CD8-positive, alpha-beta T cell (primary cell): ENCODE measurements at regions of chr1 and their contacts with region 1.

Region 1: DNA sequence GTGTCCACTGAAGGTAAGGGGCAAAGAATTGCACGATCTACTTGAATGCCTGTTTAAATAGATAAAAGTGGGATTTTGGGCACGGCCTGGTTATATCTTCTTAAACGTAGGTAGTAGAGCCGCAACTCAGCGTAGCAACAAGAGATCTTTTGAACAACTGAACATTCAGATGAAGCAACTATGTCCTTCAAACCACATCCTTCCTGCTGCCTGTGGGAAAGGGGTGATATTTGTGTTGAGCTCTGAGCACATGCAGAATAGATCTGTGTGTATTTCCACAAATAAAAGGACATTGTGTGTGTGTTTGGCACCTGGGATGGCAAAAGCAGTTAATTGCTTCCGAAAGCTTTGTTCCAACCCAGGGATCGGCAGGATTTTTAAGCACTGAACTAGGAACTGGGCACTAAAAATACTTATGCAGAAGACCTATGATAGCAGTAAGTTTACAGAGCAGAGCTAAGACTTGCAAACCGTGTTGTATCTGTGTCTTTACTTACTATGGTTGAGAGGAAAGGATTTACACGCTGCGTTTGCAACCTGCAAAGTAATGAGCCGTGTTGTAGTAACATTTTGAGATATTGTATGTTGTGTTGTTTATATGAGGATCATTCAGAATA is 333.4 kb downstream of the CHRM3 start:
- DNase-seq: peak in 8 of 9 experiments; percentile 14 to 83 (median 62)
- ATAC-seq: peak; percentile 81
- H3K4me3 ChIP-seq: peak overlapping the region; percentile 53 to 64
- H3K4me3 Mint-ChIP-seq: no peak overlapping the region
- H3K27ac ChIP-seq: peak overlapping the region; percentile 84 to 91
- H3K27ac Mint-ChIP-seq: peak overlapping the region; percentile 96
- H3K4me1 ChIP-seq: peaks cover 53% of the 10 kb centered on the region
- H3K4me1 Mint-ChIP-seq: peaks cover 47% of the 10 kb centered on the region
- H3K27me3 ChIP-seq: no peaks in the 10 kb centered on the region
- H3K27me3 Mint-ChIP-seq: no peaks in the 10 kb centered on the region
- CTCF ChIP-seq: no peak

Region 2: DNA sequence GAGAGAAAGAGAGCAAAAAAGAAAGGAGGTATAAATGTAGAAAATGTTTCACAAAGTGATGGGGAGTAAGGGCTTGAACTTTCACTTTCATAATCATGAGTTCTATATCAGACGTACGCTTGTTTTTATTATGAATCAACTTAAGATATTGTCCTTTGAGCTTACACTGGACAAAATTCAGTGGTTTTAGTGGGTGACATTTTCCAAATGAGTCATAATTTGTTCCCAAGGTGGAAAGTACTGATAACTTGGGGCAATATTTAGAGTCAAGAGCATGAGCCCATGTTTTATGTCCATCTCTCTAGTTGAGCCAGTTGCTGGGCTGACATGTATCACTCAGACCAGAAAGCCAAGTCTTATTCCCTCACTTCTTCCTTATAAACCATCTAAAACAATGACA is 171.8 kb before region 1 on chr1:
- CTCF ChIA-PET with region 1: no interaction called
- POLR2A ChIA-PET with region 1: interaction called, 4 read pairs
- intact Hi-C with region 1: loop called in 1 of 2 experiments (anchors 10 kb)
- DNase-seq: peak in 2 of 9 experiments; percentile 12 to 29
- ATAC-seq: peak; percentile 46
- H3K4me3 ChIP-seq: peak overlapping the region; percentile 27 to 37
- H3K4me3 Mint-ChIP-seq: peak overlapping the region; percentile 72
- H3K27ac ChIP-seq: peak overlapping the region in 1 of 2 experiments; percentile 25
- H3K27ac Mint-ChIP-seq: peak overlapping the region; percentile 85
- H3K4me1 ChIP-seq: no peaks in the 10 kb centered on the region
- H3K4me1 Mint-ChIP-seq: peaks cover 16% of the 10 kb centered on the region
- H3K27me3 ChIP-seq: no peaks in the 10 kb centered on the region
- H3K27me3 Mint-ChIP-seq: no peaks in the 10 kb centered on the region
- CTCF ChIP-seq: no peak

Region 3: DNA sequence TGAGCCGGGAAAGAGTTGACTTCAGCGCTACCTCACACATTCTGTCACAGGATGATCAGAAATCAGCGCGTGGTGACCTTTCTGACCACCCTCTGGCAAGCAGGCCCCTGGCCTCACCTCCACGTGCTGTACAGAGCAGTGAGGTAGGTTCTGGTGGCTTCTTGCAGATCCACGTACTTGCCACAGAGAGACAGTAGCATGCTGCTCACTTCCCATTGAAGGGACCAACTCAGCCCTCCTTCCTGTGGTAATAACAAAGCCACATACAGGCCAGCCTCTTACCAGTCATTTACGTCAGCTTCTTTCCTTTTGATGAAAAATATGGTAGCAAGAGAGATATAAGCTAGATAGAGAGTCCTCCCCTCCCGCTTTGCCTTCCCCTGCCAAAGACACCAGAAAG is 132.7 kb before region 1 on chr1:
- CTCF ChIA-PET with region 1: interaction called, 8 read pairs
- POLR2A ChIA-PET with region 1: interaction called, 3 read pairs
- intact Hi-C with region 1: loop called in 1 of 2 experiments (anchors 5 kb)
- DNase-seq: peak in 8 of 9 experiments; percentile 1 to 80 (median 42)
- ATAC-seq: peak; percentile 99
- H3K4me3 ChIP-seq: no peak overlapping the region
- H3K4me3 Mint-ChIP-seq: peak overlapping the region; percentile 20
- H3K27ac ChIP-seq: no peak overlapping the region
- H3K27ac Mint-ChIP-seq: peak overlapping the region; percentile 10
- H3K4me1 ChIP-seq: peaks cover 10% of the 10 kb centered on the region
- H3K4me1 Mint-ChIP-seq: peaks cover 14% of the 10 kb centered on the region
- H3K27me3 ChIP-seq: no peaks in the 10 kb centered on the region
- H3K27me3 Mint-ChIP-seq: no peaks in the 10 kb centered on the region
- CTCF ChIP-seq: peak; percentile 28

Region 4: DNA sequence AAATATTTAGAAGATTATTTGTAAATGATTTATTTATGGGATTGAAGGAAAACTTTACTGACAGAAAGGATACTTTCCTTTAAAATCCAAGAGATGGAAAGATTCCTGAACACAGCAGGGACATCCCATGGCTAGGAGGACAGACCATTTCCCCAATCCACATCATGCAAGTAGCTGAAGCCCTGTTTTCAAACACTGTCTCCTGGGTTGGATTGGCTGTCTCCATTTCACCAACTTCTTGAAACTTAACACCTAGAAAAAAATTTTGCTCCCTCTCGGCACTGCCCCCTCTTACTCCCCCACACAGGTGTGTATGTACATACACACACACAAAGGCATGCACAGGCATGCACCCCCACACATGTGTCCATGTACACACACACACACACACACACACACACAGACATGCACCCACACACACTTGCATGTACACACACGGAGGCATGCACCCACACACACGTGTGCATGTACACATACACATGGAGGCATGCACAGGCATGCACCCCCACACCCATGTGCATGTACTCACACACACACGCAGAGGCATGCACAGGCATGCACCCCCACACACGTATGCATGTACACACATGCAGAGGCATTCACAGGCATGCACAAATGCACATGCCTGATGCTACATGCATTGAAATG is 13.4 kb before region 1 on chr1:
- CTCF ChIA-PET with region 1: interaction called, 4 read pairs
- POLR2A ChIA-PET with region 1: interaction called, 18 read pairs
- intact Hi-C with region 1: no loop called
- DNase-seq: no peak
- ATAC-seq: no peak
- H3K4me3 ChIP-seq: no peak overlapping the region
- H3K4me3 Mint-ChIP-seq: no peak overlapping the region
- H3K27ac ChIP-seq: no peak overlapping the region
- H3K27ac Mint-ChIP-seq: no peak overlapping the region
- H3K4me1 ChIP-seq: no peaks in the 10 kb centered on the region
- H3K4me1 Mint-ChIP-seq: peaks cover 24% of the 10 kb centered on the region
- H3K27me3 ChIP-seq: no peaks in the 10 kb centered on the region
- H3K27me3 Mint-ChIP-seq: no peaks in the 10 kb centered on the region
- CTCF ChIP-seq: no peak

Region 5: GRCh38 chr1:239792157-239792556 is 72.4 kb after region 1 on chr1:
- CTCF ChIA-PET with region 1: no interaction called
- POLR2A ChIA-PET with region 1: no interaction called
- intact Hi-C with region 1: loop called in 1 of 2 experiments (anchors 10 kb)
- DNase-seq: no peak
- ATAC-seq: no peak
- H3K4me3 ChIP-seq: no peak overlapping the region
- H3K4me3 Mint-ChIP-seq: no peak overlapping the region
- H3K27ac ChIP-seq: no peak overlapping the region
- H3K27ac Mint-ChIP-seq: no peak overlapping the region
- H3K4me1 ChIP-seq: no peaks in the 10 kb centered on the region
- H3K4me1 Mint-ChIP-seq: no peaks in the 10 kb centered on the region
- H3K27me3 ChIP-seq: no peaks in the 10 kb centered on the region
- H3K27me3 Mint-ChIP-seq: no peaks in the 10 kb centered on the region
- CTCF ChIP-seq: no peak